Body of pancreas (tissue), 4 donors: ENCODE measurements at regions of chr15 and their contacts with region 1.

Region 1: GRCh38 chr15:47523681-47524475 is 193.4 kb upstream of the SEMA6D start:
- DNase-seq: no peak
- ATAC-seq: no peak
- H3K4me3 ChIP-seq: no peak overlapping the region
- H3K27ac ChIP-seq: no peak overlapping the region
- H3K4me1 ChIP-seq: no peaks in the 10 kb centered on the region
- H3K27me3 ChIP-seq: no peaks in the 10 kb centered on the region
- CTCF ChIP-seq: no peak
- POLR2A ChIP-seq: no peak

Region 2: GRCh38 chr15:47586653-47587224 is 62.9 kb after region 1 on chr15:
- intact Hi-C with region 1: loop called (anchors 10 kb)
- DNase-seq: peak in 1 of 4 donors; percentile 8
- ATAC-seq: no peak
- H3K4me3 ChIP-seq: no peak overlapping the region
- H3K27ac ChIP-seq: no peak overlapping the region
- H3K4me1 ChIP-seq: no peaks in the 10 kb centered on the region
- H3K27me3 ChIP-seq: no peaks in the 10 kb centered on the region
- CTCF ChIP-seq: no peak
- POLR2A ChIP-seq: no peak